HCT116 (cell line): ENCODE measurements at regions of chr4 and their contacts with region 1.

Region 1: DNA sequence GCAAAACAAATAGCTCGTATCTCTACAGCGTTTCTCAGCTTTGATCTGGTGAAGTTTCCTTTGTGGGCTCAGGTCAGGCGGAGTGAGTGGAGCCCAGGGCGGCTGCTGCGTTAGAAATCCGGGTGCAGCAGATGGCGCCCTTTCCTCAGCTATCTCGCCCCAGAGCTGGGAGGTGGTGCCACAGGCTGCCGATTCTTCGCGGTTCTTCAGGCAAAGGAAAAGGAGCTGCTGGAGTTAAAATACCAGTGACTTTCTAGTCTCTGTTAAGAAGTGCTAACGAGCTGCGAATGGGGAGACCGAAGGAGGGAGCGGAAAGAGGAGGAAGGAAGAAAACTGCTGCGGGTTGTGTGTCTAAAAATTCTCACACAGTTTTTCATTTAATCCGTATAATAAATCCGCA is 114.6 kb downstream of the CPE start:
- DNase-seq: peak; percentile 37
- ATAC-seq: peak; percentile 100
- H3K4me3 ChIP-seq: no peak overlapping the region
- H3K27ac ChIP-seq: no peak overlapping the region
- H3K4me1 ChIP-seq: peaks cover 0 to 3% of the 10 kb centered on the region in 2 experiments; a peak in 2 of 4 replicates
- H3K27me3 ChIP-seq: no peaks in the 10 kb centered on the region
- CTCF ChIP-seq: peak; percentile 64 to 82 (median 65); a peak in 5 of 6 replicates
- POLR2A ChIP-seq: no peak
- RAD21 ChIP-seq: peak; percentile 93

Region 2: DNA sequence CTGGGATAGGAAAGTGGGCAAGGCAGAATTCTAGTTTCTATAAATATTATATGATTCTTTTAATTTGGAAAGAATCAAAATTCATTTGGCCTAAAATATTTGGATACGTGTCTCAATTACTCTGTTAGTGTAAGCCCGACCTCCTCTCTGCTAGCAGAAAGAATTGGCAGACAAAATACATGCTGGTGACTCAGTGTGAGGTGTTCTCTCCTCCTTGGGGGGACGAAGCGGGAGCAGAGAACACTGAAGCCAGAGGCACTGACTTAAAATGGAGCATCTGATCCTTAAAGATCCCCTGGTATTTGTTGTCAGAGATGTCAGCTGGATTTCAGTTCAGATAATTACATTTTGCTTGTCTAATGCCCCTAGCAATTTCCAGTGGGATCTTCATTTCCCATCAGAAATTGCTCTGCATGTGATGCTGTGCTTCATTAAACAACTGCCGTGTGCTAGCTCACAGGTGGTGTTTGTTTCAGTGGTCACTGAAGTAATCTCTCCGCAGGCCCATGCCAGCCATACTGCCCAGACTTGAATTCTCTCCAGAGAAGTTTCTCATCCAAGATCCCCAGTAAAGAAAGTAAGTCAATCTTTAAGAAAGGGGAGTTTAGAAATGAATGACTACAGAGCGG is 190.9 kb after region 1 on chr4:
- CTCF ChIA-PET with region 1: no interaction called
- POLR2A ChIA-PET with region 1: no interaction called
- RAD21 ChIA-PET with region 1: no interaction called
- intact Hi-C with region 1: no loop called
- DNase-seq: no peak
- ATAC-seq: no peak
- H3K4me3 ChIP-seq: no peak overlapping the region
- H3K27ac ChIP-seq: no peak overlapping the region
- H3K4me1 ChIP-seq: no peaks in the 10 kb centered on the region
- H3K27me3 ChIP-seq: no peaks in the 10 kb centered on the region
- CTCF ChIP-seq: no peak
- POLR2A ChIP-seq: no peak
- RAD21 ChIP-seq: no peak

Region 3: DNA sequence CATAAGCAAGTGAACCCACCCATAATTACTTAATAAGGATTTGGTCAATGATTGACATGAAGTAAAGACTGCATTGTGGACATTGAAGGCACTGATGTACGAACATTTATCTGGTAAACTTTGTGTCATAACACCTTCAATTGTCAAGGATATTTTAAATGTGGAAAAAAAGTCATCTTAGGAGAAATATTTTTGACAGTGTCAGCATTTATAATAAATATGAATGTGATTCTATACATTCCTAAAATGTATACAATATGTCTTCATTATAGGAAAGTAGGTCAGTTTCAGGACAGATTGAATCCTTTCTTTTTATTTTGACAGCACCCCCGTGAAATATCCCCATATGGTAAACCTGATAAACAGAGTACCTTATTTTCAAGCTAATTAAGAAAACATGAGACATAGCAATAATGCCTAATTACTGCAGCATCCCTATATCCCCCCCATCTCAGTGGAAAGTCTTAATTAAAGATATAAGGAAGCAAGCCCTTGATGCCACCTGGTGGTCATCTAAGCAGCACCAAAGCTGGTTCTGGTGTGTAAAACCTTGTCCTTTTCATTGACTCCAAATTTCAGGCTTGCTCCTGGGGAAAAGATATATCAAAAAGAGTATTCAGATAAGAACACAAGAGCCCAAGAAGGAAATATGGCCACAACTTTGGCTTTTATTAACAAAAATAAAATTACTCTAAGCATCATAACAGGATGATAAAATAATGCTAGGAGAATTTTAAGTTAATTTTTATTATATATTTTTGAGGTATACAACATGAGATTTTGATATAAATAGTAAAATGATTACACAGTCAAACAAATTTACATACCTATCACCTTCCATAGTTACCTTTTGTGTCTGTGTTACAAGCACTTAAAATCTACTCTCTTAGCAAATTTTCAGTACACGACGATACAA is 759.4 kb after region 1 on chr4:
- CTCF ChIA-PET with region 1: no interaction called
- POLR2A ChIA-PET with region 1: no interaction called
- RAD21 ChIA-PET with region 1: no interaction called
- intact Hi-C with region 1: loop called (anchors 2 kb)
- DNase-seq: peak; percentile 37
- ATAC-seq: peak; percentile 77
- H3K4me3 ChIP-seq: no peak overlapping the region
- H3K27ac ChIP-seq: no peak overlapping the region
- H3K4me1 ChIP-seq: no peaks in the 10 kb centered on the region
- H3K27me3 ChIP-seq: no peaks in the 10 kb centered on the region
- CTCF ChIP-seq: peak; percentile 52 to 81 (median 72); a peak in 5 of 6 replicates
- POLR2A ChIP-seq: no peak
- RAD21 ChIP-seq: peak; percentile 59